AG04449 (cell line): ENCODE measurements at regions of chr2 and their contacts with region 1.

Region 1: DNA sequence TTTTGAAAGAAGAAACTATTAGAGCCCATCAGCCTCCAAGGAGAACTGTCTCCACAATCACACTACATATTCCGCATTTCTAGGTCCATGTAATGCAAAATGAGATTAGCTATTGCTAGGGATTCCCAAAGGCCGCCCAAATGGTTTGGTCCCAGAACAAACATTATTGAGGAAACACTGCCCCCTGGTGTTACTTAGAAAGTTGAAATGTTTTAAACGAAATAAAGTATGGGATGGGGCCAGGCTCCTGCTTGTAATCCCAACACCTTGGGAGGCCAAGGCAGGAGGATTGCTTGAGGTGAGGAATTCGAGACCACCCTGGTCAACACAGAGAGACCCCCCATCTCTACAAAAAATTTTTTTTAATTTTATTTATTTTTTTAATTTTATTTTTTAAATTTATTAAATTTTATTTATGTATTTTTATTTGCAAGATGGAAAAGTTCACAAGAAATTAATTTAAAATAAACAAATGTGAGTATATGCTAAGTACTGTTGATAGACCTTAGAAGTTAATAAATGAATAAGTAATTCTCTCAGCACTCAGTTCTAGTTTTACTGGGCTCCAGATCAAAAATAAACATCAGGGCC is 5.5 kb downstream of the NHEJ1 start:
- DNase-seq: no peak
- H3K4me3 ChIP-seq: no peak overlapping the region
- CTCF ChIP-seq: peak; percentile 34

Region 2: GRCh38 chr2:218979846-218980734 is 175.1 kb before region 1 on chr2:
- CTCF ChIA-PET with region 1: interaction called, 53 read pairs
- POLR2A ChIA-PET with region 1: no interaction called
- DNase-seq: no peak
- H3K4me3 ChIP-seq: peak overlapping the region; percentile 45
- CTCF ChIP-seq: peak; percentile 93

Region 3: GRCh38 chr2:219010162-219010756 is 144.9 kb before region 1 on chr2:
- CTCF ChIA-PET with region 1: interaction called, 17 read pairs
- POLR2A ChIA-PET with region 1: no interaction called
- DNase-seq: no peak
- H3K4me3 ChIP-seq: no peak overlapping the region
- CTCF ChIP-seq: peak; percentile 18

Region 4: DNA sequence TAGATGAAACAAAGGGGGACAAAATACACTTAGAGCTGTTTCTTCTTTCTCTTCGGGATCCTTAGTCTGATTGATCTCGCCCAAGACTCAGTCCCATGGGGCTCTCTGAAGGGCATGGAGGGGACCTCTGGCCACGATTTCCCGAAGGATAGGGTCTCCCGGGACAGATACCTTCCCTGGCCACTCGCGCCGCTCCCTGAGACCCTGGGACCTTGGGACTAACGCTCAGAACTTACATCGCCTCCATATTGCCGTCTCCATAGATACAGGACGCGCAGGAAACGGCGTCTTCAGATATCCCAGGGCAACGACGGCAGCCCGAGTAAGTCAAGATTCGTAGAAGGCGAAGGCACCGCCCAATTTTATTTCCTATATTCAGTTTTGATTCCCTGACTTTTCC is 113.9 kb before region 1 on chr2 and contains the start of gene CFAP65:
- CTCF ChIA-PET with region 1: interaction called, 18 read pairs
- POLR2A ChIA-PET with region 1: no interaction called
- DNase-seq: no peak
- H3K4me3 ChIP-seq: peak within 1 kb of the TSS; percentile 56
- CTCF ChIP-seq: no peak

Region 5: DNA sequence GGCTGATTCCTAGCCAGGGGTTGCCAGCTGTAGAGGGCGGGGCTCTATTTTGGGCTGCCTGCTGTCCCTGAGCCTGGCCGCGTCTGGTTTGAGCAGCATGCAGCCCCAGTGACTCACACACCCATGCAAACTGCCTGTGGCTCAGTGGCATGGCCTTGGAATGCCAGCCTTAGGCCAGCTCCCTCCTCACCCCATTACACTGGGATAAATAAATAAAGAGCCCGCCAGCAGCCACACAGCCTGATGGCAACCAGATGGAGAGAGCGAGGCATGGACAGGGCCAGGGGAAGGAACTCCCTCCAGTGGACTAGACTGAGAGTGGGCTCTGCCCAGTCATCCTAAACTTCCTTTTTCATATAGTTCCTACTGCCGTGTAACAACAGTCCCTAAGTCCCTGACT is 12.8 kb before region 1 on chr2:
- CTCF ChIA-PET with region 1: interaction called, 56 read pairs
- POLR2A ChIA-PET with region 1: no interaction called
- DNase-seq: peak; percentile 46
- H3K4me3 ChIP-seq: no peak overlapping the region
- CTCF ChIP-seq: peak; percentile 51